Aorta (tissue), 5 donors: ENCODE measurements at regions of chr6 and their contacts with region 1.

Region 1: DNA sequence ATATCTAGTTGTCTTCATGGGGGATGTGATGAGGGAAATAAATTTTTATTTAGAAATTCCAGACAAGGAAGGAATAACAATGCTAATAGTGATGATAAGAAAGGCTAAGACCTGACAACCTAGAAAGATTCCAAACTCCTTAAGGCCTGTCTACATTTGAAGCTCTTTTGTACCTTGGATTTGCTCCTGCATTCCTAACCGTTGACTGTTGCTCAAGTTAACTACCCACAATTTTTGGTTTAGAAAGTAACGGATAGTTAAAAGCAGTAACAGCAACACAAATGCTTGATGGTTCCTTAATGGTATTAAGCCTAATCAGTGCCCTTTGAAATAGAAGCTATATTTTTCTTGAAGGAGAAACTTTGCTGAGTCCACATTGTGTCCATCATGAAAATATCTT is 52.9 kb downstream of the TRMT11 start:
- DNase-seq: no peak
- ATAC-seq: no peak
- H3K4me3 ChIP-seq: no peak overlapping the region
- H3K27ac ChIP-seq: peak overlapping the region in 1 of 2 donors; percentile 67
- H3K4me1 ChIP-seq: no peaks in the 10 kb centered on the region
- H3K27me3 ChIP-seq: no peaks in the 10 kb centered on the region

Region 2: GRCh38 chr6:125707615-125708243 is 331.6 kb before region 1 on chr6:
- intact Hi-C with region 1: no loop called
- DNase-seq: no peak
- ATAC-seq: no peak
- H3K4me3 ChIP-seq: no peak overlapping the region
- H3K27ac ChIP-seq: no peak overlapping the region
- H3K4me1 ChIP-seq: no peaks in the 10 kb centered on the region
- H3K27me3 ChIP-seq: no peaks in the 10 kb centered on the region

Region 3: DNA sequence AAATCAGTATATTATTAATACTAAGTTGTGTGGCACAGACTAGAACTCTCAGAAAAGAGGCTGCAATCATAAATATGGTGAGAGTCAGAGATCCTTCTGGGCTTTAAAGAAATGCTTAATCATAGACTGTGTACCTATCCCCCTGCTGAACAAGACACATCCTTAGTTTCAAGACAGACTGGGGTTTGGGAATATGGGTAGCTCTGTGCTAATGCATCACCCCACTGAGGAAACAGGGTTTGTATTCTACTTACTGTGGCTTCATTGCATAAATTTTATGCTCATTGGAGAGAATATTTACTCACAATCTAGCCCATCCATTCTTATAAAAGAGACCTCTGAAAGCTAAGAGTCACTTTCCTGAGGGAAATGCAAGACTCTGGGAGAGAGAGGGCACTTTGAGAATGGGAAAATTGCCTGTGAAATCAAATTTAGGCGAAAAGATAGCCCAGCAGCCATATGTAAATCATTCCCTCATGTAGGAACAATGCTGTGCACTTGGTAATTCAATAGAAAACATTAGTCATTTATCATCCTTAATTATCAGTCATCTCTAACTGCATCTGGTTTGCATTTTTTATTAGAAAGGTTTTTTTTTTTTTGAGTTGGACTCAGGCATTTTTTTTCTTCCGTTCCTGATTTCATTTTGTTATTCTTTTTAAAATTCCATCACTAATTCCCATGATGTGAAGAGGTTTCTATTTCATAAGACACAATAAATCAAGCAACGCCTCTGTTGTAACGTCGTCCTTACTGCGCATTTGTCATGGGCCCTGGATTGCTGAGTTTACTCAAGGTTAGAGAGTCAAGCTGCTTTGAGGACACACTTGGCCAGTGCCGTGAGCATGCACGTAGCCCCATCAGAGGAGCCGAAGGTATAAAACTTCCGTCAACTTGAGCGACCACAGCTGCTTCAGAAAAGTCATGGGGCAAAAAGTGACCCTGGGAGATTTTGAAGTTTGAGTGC is 38.8 kb after region 1 on chr6:
- intact Hi-C with region 1: no loop called
- DNase-seq: no peak
- ATAC-seq: peak; percentile 83
- H3K4me3 ChIP-seq: no peak overlapping the region
- H3K27ac ChIP-seq: no peak overlapping the region
- H3K4me1 ChIP-seq: peaks cover 0 to 2% of the 10 kb centered on the region in 2 donors
- H3K27me3 ChIP-seq: no peaks in the 10 kb centered on the region

Region 4: DNA sequence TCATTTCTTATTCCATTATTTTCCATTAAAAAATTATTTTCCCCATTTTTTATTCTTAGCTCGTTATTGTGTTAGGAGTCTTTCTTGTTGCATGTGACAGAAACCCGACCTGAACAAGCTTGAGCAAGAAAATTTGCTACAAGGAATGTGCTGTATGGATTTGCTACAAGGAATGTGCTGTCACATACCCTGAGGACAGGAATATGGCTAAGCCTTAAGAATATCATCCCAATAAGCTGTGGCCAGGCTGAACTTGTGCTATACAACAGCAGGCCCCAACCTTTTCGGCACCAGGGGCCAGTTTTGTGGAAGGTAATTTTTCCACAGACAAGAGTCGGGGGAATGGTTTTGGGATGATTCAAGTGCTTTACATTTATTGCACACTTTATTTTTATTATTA is 61.1 kb after region 1 on chr6:
- intact Hi-C with region 1: no loop called
- DNase-seq: no peak
- ATAC-seq: no peak
- H3K4me3 ChIP-seq: no peak overlapping the region
- H3K27ac ChIP-seq: no peak overlapping the region
- H3K4me1 ChIP-seq: no peaks in the 10 kb centered on the region
- H3K27me3 ChIP-seq: no peaks in the 10 kb centered on the region

Region 5: GRCh38 chr6:126112144-126112632 is 72.9 kb after region 1 on chr6:
- intact Hi-C with region 1: loop called in 1 of 2 experiments (anchors 5 kb)
- DNase-seq: no peak
- ATAC-seq: no peak
- H3K4me3 ChIP-seq: no peak overlapping the region
- H3K27ac ChIP-seq: no peak overlapping the region
- H3K4me1 ChIP-seq: no peaks in the 10 kb centered on the region
- H3K27me3 ChIP-seq: no peaks in the 10 kb centered on the region